ENCODE measurements at regions of chr17 and their contacts with region 1.

Region 1: DNA sequence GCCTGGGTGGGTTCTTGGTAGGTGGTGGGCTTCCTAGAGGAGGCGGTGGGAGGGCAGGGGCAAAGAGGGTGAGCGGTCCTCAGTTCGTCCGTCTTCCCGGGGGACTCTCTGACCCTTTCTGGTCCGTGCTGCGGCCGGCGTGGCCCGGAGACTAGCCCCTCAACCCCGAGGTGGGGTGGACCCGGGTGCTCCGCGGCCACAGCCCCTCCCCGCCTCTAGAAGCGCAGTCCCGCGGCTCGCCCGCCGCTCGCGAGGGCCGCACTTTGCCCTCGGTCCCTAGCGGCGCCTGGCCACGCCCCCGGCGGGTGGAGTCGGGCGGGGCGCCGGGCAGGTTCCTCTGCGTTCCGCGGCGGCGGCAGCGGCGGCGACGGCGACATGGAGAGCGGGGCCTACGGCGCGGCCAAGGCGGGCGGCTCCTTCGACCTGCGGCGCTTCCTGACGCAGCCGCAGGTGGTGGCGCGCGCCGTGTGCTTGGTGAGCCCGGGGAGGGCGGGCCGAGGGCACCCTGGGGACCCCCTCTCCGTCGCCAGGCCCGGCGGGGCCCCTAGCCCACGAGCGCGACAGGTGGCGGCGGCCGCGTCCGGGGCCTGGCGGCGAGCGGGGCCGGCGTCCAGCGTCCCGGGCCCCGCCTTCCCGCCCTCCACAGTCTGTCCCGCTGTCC is at the start of gene SYNGR2:
- DNase-seq: peak in 1 of 2 donors; percentile 88
- H3K4me3 ChIP-seq: peak within 1 kb of the TSS; percentile 97
- H3K27ac ChIP-seq: peak within 1 kb of the TSS; percentile 91 to 96
- H3K4me1 ChIP-seq: peaks cover 7 to 30% of the 10 kb centered on the region in 2 donors
- H3K27me3 ChIP-seq: no peaks in the 10 kb centered on the region
- CTCF ChIP-seq: peak in 1 of 3 experiments; percentile 12
- total RNA-seq, gene SYNGR2: 115 TPM

Region 2: DNA sequence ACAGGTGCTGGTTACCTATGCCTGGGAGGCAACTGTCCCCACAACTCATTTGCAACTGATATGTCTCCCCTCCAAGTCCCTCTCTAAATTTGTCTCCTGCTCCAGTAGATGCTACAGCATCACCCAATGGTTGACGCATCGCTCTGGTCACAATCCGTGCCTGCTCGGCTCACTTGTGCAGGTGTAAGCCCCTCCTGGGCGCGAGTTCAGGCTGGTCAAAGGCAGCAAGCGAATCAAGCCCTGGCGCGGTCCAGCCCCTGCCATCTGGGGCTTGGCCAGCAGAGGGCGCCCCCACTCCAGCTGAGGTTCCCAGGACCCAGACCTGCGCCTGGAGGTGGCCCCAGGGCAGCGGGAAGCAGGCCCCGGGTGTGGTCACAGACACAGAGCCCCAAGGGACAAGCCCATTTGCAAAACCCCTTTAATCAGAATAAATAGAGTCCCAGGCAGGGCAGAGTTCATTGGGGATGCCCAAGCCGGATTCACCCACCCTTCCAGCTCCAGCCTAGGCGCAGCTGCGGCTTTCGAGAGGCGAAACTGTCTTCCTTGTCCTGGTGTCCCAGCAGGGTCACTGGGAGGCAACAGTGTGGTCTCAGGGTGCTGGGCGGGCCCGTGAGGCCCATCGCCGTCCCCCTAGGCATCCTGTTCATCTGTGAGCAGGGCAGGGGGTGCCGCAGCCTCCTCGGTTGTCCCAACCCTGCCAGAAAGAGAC is 55.7 kb before region 1 on chr17:
- intact Hi-C with region 1: loop called (anchors 2 kb)
- DNase-seq: peak in 1 of 2 donors; percentile 82
- H3K4me3 ChIP-seq: no peak overlapping the region
- H3K27ac ChIP-seq: no peak overlapping the region
- H3K4me1 ChIP-seq: peaks cover 0 to 4% of the 10 kb centered on the region in 2 donors
- H3K27me3 ChIP-seq: no peaks in the 10 kb centered on the region
- CTCF ChIP-seq: peak; percentile 97 to 100 (median 98)

Region 3: GRCh38 chr17:78144147-78144719 is 24.1 kb before region 1 on chr17:
- intact Hi-C with region 1: no loop called
- DNase-seq: peak; percentile 40 to 84
- H3K4me3 ChIP-seq: no peak overlapping the region
- H3K27ac ChIP-seq: peak overlapping the region in 1 of 2 donors; percentile 18
- H3K4me1 ChIP-seq: peaks cover 3 to 8% of the 10 kb centered on the region in 2 donors
- H3K27me3 ChIP-seq: no peaks in the 10 kb centered on the region
- CTCF ChIP-seq: no peak

Region 4: DNA sequence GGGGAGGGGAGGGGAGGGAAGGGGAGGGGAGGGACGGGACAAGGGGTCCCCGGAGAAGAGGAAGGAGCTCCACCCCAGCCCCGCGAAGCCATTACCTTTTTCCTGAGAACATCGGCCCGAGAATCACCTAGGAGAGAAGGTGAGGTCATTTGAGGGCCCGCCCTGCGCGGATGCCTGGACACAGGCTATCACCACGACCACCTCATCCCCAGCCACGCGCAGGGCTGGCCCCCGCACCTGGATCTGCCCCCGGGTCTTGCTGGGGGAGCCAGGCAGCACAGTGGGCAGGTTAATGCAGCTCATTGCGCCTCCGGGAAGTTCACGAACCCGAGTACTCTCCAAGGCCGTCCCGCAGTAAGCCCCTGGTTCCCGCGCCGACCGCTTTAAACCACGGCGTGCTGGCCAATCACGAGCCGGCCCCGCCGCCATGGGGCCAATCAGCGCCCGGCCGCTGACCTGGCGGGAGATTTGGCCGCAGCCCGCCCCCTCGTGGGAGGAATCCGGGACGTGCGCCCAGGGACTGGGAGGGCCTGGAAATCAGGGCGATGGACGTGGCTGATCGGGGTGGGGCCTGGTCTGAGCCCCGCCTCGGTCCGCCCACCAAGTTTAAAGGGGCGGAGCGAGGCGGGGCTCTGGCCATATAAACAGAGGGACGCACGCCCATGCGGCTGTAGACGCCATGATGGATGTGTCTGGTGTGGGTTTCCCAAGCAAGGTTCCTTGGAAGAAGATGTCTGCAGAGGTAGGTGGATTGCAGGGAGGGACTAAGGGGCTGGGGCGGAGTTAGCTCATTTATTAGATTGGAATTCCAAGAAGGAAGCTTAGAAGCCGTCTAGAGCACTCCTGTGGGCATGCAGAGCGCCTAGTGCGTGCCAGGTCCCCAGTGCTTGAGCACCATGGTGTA is 18.6 kb after region 1 on chr17 and contains the starts of genes AFMID and TK1:
- intact Hi-C with region 1: loop called (anchors 1 kb)
- DNase-seq: peak; percentile 83 to 98
- H3K4me3 ChIP-seq: peak within 1 kb of the TSS; percentile 50 to 62
- H3K27ac ChIP-seq: peak within 1 kb of the TSS; percentile 1 to 65
- H3K4me1 ChIP-seq: peaks cover 13 to 22% of the 10 kb centered on the region in 2 donors
- H3K27me3 ChIP-seq: no peaks in the 10 kb centered on the region
- CTCF ChIP-seq: peak; percentile 81 to 90 (median 85)
- total RNA-seq, gene AFMID: 107 TPM
- total RNA-seq, gene TK1: not detected

Measured in ascending aorta (tissue), 2 donors.